ENCODE measurements at regions of chr4 and their contacts with region 1.

Region 1: DNA sequence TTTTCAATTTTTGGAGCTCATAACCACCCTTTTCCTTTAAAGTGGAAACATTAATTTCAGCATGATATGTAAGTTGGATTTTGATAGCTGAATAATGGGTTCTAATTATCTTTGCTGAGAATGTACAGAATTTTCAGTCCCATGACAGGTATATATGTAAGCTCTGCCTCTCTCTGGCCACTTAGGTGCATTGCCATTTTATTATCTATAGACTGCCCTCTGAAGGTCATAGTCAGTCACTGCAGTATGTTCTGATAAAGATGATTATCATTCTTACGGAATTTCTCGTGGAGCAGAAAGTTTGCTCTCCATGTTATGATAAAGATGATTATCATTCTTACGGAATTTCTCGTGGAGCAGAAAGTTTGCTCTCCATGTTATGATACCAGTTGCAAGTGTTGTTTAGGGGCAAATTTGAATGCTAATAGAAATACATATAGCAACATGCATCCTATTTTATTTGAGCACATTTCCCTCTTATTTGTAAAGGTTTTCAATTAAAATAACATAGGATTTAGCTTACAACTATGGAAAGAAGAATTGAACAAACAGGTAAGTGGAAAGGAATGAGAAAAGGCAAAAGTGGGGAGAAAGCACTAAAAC is 10.4 kb downstream of the AFP start:
- DNase-seq: no peak
- H3K4me3 ChIP-seq: no peak overlapping the region
- CTCF ChIP-seq: peak; percentile 55

Region 2: DNA sequence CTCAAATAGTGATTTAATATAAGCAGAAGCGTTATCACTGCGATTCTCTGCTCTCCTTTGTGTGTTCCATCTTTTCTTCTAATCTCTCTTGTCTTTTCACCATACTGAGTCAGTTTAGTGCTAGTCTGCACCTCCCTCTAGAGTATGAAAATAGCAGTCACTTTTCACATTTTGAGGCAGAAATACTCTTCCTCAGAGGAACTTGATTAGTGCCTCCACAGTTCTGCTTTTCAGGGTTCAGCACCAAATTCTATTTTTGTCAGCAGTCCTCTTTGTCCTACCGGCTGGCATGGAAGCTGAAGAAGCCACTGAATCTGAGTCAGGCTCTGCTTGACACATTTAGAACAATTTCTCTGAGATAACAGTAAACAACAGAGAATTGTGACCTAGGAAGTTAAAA is 138.2 kb before region 1 on chr4:
- CTCF ChIA-PET with region 1: interaction called, 17 read pairs
- POLR2A ChIA-PET with region 1: no interaction called
- DNase-seq: no peak
- H3K4me3 ChIP-seq: no peak overlapping the region
- CTCF ChIP-seq: peak; percentile 38

Region 3: DNA sequence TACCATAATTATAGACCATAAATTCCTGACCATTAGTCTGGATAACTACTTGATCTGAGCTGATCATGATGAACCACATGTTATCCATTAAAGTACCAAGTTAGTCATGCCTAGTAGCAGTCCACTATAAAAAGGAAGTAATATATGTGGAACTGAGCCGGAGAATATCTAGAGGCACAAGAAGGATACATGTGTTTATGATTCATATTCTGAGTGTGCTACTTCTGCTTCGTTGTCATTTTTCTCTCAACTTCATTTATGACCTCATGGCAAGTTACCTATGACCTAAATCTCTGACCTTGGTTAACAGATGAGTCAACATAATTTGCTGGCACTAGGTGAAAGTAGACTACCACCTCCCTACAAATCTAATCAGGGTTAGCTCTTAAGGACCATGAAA is 131.3 kb before region 1 on chr4:
- CTCF ChIA-PET with region 1: interaction called, 17 read pairs
- POLR2A ChIA-PET with region 1: no interaction called
- DNase-seq: no peak
- H3K4me3 ChIP-seq: no peak overlapping the region
- CTCF ChIP-seq: no peak

Region 4: DNA sequence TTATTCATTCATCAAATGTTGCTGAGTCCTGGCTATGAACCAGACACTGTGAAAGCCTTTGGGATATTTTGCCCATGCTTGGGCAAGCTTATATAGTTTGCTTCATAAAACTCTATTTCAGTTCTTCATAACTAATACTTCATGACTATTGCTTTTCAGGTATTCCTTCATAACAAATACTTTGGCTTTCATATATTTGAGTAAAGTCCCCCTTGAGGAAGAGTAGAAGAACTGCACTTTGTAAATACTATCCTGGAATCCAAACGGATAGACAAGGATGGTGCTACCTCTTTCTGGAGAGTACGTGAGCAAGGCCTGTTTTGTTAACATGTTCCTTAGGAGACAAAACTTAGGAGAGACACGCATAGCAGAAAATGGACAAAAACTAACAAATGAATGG is 12.1 kb before region 1 on chr4:
- CTCF ChIA-PET with region 1: interaction called, 53 read pairs
- POLR2A ChIA-PET with region 1: no interaction called
- DNase-seq: no peak
- H3K4me3 ChIP-seq: no peak overlapping the region
- CTCF ChIP-seq: peak; percentile 24

Region 5: DNA sequence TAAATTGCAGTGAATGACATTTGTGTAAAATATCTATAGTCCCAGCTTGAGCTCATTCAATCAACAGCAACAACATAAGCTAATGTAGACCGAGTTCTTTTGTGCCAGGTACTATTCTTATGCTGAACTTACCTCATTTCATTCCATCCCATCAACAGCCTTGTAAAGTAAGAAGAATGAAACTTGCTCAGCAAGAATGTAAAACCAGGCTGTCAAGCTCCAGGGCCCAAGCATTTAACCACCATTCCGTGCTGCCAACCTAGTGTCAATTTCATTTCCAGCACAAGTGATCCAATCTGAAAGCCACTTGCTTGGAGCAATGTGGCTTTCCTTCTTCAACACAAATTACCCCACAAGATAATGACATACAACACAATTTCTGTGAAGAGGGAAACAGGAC is 137.2 kb after region 1 on chr4:
- CTCF ChIA-PET with region 1: no interaction called
- POLR2A ChIA-PET with region 1: no interaction called
- DNase-seq: no peak
- H3K4me3 ChIP-seq: no peak overlapping the region
- CTCF ChIP-seq: no peak

Region 6: GRCh38 chr4:73788411-73788810 is 342.0 kb after region 1 on chr4:
- CTCF ChIA-PET with region 1: no interaction called
- POLR2A ChIA-PET with region 1: no interaction called
- DNase-seq: no peak
- H3K4me3 ChIP-seq: no peak overlapping the region
- CTCF ChIP-seq: no peak

Measured in AG04449 (cell line).